B cell (primary cell): ENCODE measurements at regions of chr2 and their contacts with region 1.

Region 1: DNA sequence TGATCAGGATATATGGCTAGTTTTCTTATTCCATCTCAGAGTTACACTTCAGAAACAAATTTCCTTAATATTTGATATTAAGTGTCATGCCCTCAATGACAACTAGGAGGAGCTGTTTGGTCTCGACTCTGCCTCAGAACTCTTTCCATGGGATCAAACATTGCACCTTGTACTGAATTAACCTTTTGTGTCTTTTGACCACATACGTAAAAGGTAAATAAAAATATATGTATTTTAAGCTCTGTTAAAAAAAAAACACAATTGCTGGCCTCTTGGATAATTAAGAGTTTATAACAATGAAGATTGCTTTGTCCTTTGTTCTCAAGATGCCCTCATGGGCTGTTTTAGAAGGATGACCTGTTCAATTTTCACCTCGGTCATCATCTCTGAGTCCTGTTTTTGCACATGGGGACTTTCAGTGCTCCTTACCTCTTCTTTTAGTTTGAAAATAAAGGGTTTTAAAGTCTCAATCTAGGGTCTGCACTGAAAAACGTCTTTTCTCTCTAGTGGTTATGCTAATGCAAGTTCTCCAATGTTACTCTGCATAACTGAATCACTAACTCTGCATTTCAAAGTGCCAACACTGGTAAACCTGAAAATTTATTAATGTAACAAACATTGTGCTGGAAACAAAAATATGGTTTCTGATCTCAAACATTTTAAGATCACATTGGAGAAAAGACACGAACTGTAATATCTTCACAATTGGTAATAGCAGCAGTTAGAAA is 18.8 kb upstream of the FN1 start:
- DNase-seq: peak; percentile 41
- ATAC-seq: no peak
- H3K4me3 ChIP-seq: no peak overlapping the region
- H3K4me3 Mint-ChIP-seq: no peak overlapping the region
- H3K27ac ChIP-seq: no peak overlapping the region
- H3K27ac Mint-ChIP-seq: no peak overlapping the region
- H3K4me1 ChIP-seq: no peaks in the 10 kb centered on the region
- H3K4me1 Mint-ChIP-seq: no peaks in the 10 kb centered on the region
- H3K27me3 ChIP-seq: peaks cover 0 to 5% (median 2%) of the 10 kb centered on the region in 4 experiments
- H3K27me3 Mint-ChIP-seq: peaks cover 25% of the 10 kb centered on the region
- CTCF ChIP-seq: peak; percentile 95

Region 2: GRCh38 chr2:215828517-215829184 is 374.0 kb after region 1 on chr2:
- CTCF ChIA-PET with region 1: interaction called, 13 read pairs
- POLR2A ChIA-PET with region 1: no interaction called
- intact Hi-C with region 1: no loop called
- DNase-seq: peak; percentile 55
- ATAC-seq: peak; percentile 64
- H3K4me3 ChIP-seq: no peak overlapping the region
- H3K4me3 Mint-ChIP-seq: no peak overlapping the region
- H3K27ac ChIP-seq: no peak overlapping the region
- H3K27ac Mint-ChIP-seq: no peak overlapping the region
- H3K4me1 ChIP-seq: no peaks in the 10 kb centered on the region
- H3K4me1 Mint-ChIP-seq: no peaks in the 10 kb centered on the region
- H3K27me3 ChIP-seq: no peaks in the 10 kb centered on the region
- H3K27me3 Mint-ChIP-seq: peaks cover 7% of the 10 kb centered on the region
- CTCF ChIP-seq: peak; percentile 70

Region 3: GRCh38 chr2:215931256-215931903 is 476.7 kb after region 1 on chr2:
- CTCF ChIA-PET with region 1: interaction called, 20 read pairs
- POLR2A ChIA-PET with region 1: no interaction called
- intact Hi-C with region 1: loop called (anchors 1 kb)
- DNase-seq: peak; percentile 63
- ATAC-seq: peak; percentile 72
- H3K4me3 ChIP-seq: no peak overlapping the region
- H3K4me3 Mint-ChIP-seq: no peak overlapping the region
- H3K27ac ChIP-seq: no peak overlapping the region
- H3K27ac Mint-ChIP-seq: no peak overlapping the region
- H3K4me1 ChIP-seq: no peaks in the 10 kb centered on the region
- H3K4me1 Mint-ChIP-seq: no peaks in the 10 kb centered on the region
- H3K27me3 ChIP-seq: no peaks in the 10 kb centered on the region
- H3K27me3 Mint-ChIP-seq: peaks cover 5% of the 10 kb centered on the region
- CTCF ChIP-seq: peak; percentile 96